ENCODE measurements at regions of chr2 and their contacts with region 1.

Region 1: GRCh38 chr2:127415593-127416505 is 2.4 kb upstream of the PROC start:
- DNase-seq: peak; percentile 91
- H3K4me3 Mint-ChIP-seq: peak overlapping the region; percentile 70
- H3K27ac Mint-ChIP-seq: no peak overlapping the region
- H3K4me1 Mint-ChIP-seq: peaks cover 55% of the 10 kb centered on the region
- H3K27me3 Mint-ChIP-seq: peaks cover 4% of the 10 kb centered on the region
- CTCF ChIP-seq: peak; percentile 86

Region 2: GRCh38 chr2:127324635-127325034 is 91.2 kb before region 1 on chr2:
- CTCF ChIA-PET with region 1: interaction called, 9 read pairs
- intact Hi-C with region 1: loop called (anchors 5 kb)
- DNase-seq: peak; percentile 39
- H3K4me3 Mint-ChIP-seq: no peak overlapping the region
- H3K27ac Mint-ChIP-seq: no peak overlapping the region
- H3K4me1 Mint-ChIP-seq: no peaks in the 10 kb centered on the region
- H3K27me3 Mint-ChIP-seq: no peaks in the 10 kb centered on the region
- CTCF ChIP-seq: peak; percentile 66

Region 3: GRCh38 chr2:127355386-127356008 is 60.4 kb before region 1 on chr2:
- CTCF ChIA-PET with region 1: no interaction called
- intact Hi-C with region 1: loop called (anchors 2 kb)
- DNase-seq: peak; percentile 35
- H3K4me3 Mint-ChIP-seq: no peak overlapping the region
- H3K27ac Mint-ChIP-seq: no peak overlapping the region
- H3K4me1 Mint-ChIP-seq: peaks cover 8% of the 10 kb centered on the region
- H3K27me3 Mint-ChIP-seq: no peaks in the 10 kb centered on the region
- CTCF ChIP-seq: peak; percentile 48

Region 4: GRCh38 chr2:127834951-127835350 is 419.1 kb after region 1 on chr2:
- CTCF ChIA-PET with region 1: no interaction called
- intact Hi-C with region 1: no loop called
- DNase-seq: no peak
- H3K4me3 Mint-ChIP-seq: no peak overlapping the region
- H3K27ac Mint-ChIP-seq: no peak overlapping the region
- H3K4me1 Mint-ChIP-seq: no peaks in the 10 kb centered on the region
- H3K27me3 Mint-ChIP-seq: no peaks in the 10 kb centered on the region
- CTCF ChIP-seq: no peak